ENCODE measurements at regions of chr4 and their contacts with region 1.

Region 1: GRCh38 chr4:8241895-8242696 is 27.5 kb upstream of the HTRA3 start:
- DNase-seq: peak; percentile 61 to 67 (median 66)
- H3K4me3 ChIP-seq: no peak overlapping the region
- H3K4me3 Mint-ChIP-seq: no peak overlapping the region
- H3K27ac ChIP-seq: no peak overlapping the region
- H3K27ac Mint-ChIP-seq: peak overlapping the region in 2 of 7 donors; percentile 63 to 85
- H3K4me1 ChIP-seq: peaks cover 19 to 25% of the 10 kb centered on the region in 2 donors
- H3K4me1 Mint-ChIP-seq: peaks cover 48% of the 10 kb centered on the region
- H3K27me3 ChIP-seq: no peaks in the 10 kb centered on the region
- H3K27me3 Mint-ChIP-seq: peaks cover 1 to 3% (median 1%) of the 10 kb centered on the region in 3 donors
- CTCF ChIP-seq: peak; percentile 97

Region 2: DNA sequence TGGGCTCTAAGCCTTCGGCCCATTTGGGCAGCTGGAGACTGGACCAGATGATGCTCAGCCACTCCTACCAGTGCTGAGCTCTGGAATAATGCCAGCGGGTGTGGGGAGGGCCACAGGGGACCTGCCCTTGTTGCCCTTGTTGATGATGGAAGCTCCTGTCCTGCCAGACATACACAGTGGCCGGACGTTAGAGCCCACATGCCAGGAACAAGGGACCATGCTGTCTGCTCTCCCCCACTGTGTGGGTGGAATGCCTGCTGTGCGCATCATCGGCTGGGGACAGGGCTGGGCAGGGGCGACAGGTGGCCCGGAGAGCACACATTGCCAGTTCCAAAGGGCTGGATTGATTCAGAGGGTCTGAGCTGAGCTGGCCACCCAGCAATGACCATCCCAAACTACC is 85.5 kb before region 1 on chr4:
- intact Hi-C with region 1: no loop called
- DNase-seq: no peak
- H3K4me3 ChIP-seq: no peak overlapping the region
- H3K4me3 Mint-ChIP-seq: peak overlapping the region in 1 of 2 donors; percentile 78
- H3K27ac ChIP-seq: no peak overlapping the region
- H3K27ac Mint-ChIP-seq: no peak overlapping the region
- H3K4me1 ChIP-seq: peaks cover 18 to 28% of the 10 kb centered on the region in 2 donors
- H3K4me1 Mint-ChIP-seq: peaks cover 18% of the 10 kb centered on the region
- H3K27me3 ChIP-seq: peaks cover 18 to 39% of the 10 kb centered on the region in 2 donors
- H3K27me3 Mint-ChIP-seq: peaks cover 33 to 76% (median 47%) of the 10 kb centered on the region in 3 donors
- CTCF ChIP-seq: no peak

Region 3: GRCh38 chr4:8176547-8177399 is 65.3 kb before region 1 on chr4:
- intact Hi-C with region 1: loop called in 1 of 2 experiments (anchors 5 kb)
- DNase-seq: peak; percentile 42 to 65 (median 61)
- H3K4me3 ChIP-seq: no peak overlapping the region
- H3K4me3 Mint-ChIP-seq: no peak overlapping the region
- H3K27ac ChIP-seq: no peak overlapping the region
- H3K27ac Mint-ChIP-seq: peak overlapping the region in 1 of 7 donors; percentile 40
- H3K4me1 ChIP-seq: peaks cover under 1 to 8% of the 10 kb centered on the region in 2 donors
- H3K4me1 Mint-ChIP-seq: peaks cover 7% of the 10 kb centered on the region
- H3K27me3 ChIP-seq: no peaks in the 10 kb centered on the region
- H3K27me3 Mint-ChIP-seq: peaks cover 3 to 10% (median 4%) of the 10 kb centered on the region in 3 donors
- CTCF ChIP-seq: peak; percentile 93

Region 4: GRCh38 chr4:8198906-8199593 is 43.0 kb before region 1 on chr4 and contains the start of gene SH3TC1:
- intact Hi-C with region 1: no loop called
- DNase-seq: peak; percentile 94 to 96 (median 95)
- H3K4me3 ChIP-seq: peak within 1 kb of the TSS; percentile 56 to 94 (median 89)
- H3K4me3 Mint-ChIP-seq: peak within 1 kb of the TSS; percentile 95 to 96
- H3K27ac ChIP-seq: peak within 1 kb of the TSS; percentile 96 to 97
- H3K27ac Mint-ChIP-seq: peak within 1 kb of the TSS; percentile 95 to 99 (median 97)
- H3K4me1 ChIP-seq: peaks cover 64 to 77% of the 10 kb centered on the region in 2 donors
- H3K4me1 Mint-ChIP-seq: peaks cover 55% of the 10 kb centered on the region
- H3K27me3 ChIP-seq: no peaks in the 10 kb centered on the region
- H3K27me3 Mint-ChIP-seq: peaks cover 4 to 9% (median 4%) of the 10 kb centered on the region in 3 donors
- CTCF ChIP-seq: no peak
- polyA plus RNA-seq, gene SH3TC1: 36.9 to 85.7 (median 41.9) TPM

Region 5: DNA sequence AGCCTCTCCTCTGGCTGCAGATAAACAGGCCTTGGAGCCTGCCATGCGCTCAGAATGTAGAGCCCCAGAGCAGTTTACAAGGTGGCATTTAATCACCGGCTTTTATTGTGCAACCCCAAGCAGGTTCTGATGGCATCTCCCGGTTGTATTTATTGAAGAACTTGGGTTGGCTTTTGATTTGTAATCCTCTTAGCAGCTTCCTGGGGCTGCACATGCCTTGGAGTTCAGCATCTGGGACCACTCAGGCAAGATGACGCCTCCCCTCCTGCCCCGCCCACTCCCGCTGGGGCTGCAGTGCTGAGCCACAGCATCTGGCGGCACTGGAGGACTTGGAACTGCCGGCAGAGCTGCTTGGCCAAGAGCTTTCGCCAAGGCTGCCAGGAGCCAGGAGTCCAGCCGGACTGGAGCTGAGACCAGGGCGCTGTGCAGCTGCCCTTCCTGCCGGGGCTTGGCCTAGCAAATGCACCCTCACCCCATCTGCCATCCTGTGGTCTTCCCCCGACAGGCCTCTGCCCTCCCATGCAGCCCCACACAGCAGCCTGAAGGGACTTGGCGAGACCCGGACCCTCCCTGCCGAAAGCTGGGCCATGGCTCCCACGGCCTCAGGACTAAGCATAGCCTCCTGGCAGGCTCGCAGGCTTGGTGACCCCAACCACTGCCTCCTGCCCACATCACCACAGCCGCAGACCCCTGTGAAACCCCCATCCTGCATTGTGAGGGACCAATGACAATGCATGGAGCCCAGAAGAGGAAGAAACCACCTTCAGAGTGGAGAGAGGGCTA is 32.9 kb after region 1 on chr4:
- intact Hi-C with region 1: no loop called
- DNase-seq: no peak
- H3K4me3 ChIP-seq: no peak overlapping the region
- H3K4me3 Mint-ChIP-seq: no peak overlapping the region
- H3K27ac ChIP-seq: no peak overlapping the region
- H3K27ac Mint-ChIP-seq: no peak overlapping the region
- H3K4me1 ChIP-seq: peaks cover 12 to 24% of the 10 kb centered on the region in 2 donors
- H3K4me1 Mint-ChIP-seq: peaks cover 39% of the 10 kb centered on the region
- H3K27me3 ChIP-seq: peaks cover 0 to 12% of the 10 kb centered on the region in 2 donors
- H3K27me3 Mint-ChIP-seq: peaks cover 22 to 27% (median 22%) of the 10 kb centered on the region in 3 donors
- CTCF ChIP-seq: no peak

Measured in CD14-positive monocyte (primary cell).